Sigmoid colon (tissue), 7 donors: ENCODE measurements at regions of chr7 and their contacts with region 1.

Region 1: DNA sequence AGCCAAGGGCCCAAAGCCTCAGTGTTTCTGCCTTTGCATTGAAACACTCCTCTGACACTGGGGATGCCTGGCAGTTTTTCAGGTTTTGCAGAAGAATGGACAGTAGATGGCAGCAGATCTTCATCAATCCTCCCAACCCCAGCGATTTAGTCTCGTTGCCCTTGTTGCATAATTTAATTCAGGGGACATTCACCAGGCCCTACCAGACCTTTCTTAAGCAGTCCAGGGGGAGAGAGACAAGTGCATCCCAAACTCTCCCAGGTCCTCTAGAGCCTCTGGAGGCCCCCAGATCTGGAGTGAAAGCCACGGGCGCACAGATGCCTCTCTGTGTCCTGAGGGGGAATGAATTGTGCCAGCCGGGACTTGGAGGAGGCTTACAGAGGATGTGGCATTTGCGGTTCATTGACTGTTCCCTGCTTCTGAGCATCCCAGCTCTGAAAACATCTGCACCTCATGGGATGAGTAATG is 29.6 kb downstream of the MINDY4 start:
- DNase-seq: peak; percentile 90
- H3K4me3 ChIP-seq: no peak overlapping the region
- H3K27ac ChIP-seq: peak overlapping the region; percentile 15 to 59 (median 37)
- H3K4me1 ChIP-seq: peaks cover 0 to 72% (median 62%) of the 10 kb centered on the region in 4 donors
- H3K27me3 ChIP-seq: no peaks in the 10 kb centered on the region
- CTCF ChIP-seq: peak; percentile 64 to 76 (median 70)
- EP300 ChIP-seq: peak in 1 of 4 donors; percentile 13
- POLR2A ChIP-seq: no peak

Region 2: DNA sequence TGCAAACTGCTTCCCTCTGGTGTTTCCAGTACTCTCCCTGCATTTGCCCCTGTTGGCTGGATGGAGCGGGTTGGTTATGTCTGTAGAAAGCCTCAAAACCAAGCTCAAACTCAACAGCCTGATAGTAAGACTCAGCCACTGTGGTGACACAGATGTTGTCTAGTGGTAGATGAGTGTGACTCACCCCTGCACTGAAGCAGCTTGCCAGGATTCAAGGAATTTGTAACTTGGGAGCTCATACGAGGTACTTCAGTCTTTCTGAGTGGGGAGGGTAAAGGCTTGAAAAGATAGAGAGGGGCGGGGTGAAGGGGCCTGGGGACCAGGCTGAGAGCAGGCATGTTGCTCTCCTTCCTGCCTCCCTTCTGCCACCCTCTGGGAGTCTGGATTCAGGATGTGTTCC is 87.9 kb after region 1 on chr7:
- intact Hi-C with region 1: loop called (anchors 5 kb)
- DNase-seq: peak; percentile 79
- H3K4me3 ChIP-seq: no peak overlapping the region
- H3K27ac ChIP-seq: peak overlapping the region; percentile 63 to 75 (median 72)
- H3K4me1 ChIP-seq: peaks cover 0 to 41% (median 35%) of the 10 kb centered on the region in 4 donors
- H3K27me3 ChIP-seq: no peaks in the 10 kb centered on the region
- CTCF ChIP-seq: no peak
- EP300 ChIP-seq: no peak
- POLR2A ChIP-seq: no peak

Region 3: DNA sequence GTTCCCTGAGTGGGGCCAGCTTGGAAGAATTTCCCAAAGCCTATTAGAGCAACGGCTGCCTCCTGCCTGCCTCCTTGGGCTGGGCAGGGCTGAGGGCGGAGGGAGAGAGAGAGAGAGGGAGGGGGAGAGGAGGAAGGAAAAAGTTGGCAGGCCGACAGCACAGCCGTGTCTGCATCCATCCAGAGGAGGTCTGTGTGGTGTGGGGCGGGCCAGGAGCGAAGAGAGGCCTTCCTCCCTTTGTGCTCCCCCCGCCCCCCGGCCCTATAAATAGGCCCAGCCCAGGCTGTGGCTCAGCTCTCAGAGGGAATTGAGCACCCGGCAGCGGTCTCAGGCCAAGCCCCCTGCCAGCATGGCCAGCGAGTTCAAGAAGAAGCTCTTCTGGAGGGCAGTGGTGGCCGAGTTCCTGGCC is 110.7 kb after region 1 on chr7 and contains the start of gene AQP1:
- intact Hi-C with region 1: loop called (anchors 5 kb)
- DNase-seq: peak; percentile 96
- H3K4me3 ChIP-seq: peak within 1 kb of the TSS; percentile 9 to 52 (median 44)
- H3K27ac ChIP-seq: peak within 1 kb of the TSS; percentile 86 to 90 (median 88)
- H3K4me1 ChIP-seq: peaks cover 0 to 94% (median 89%) of the 10 kb centered on the region in 4 donors
- H3K27me3 ChIP-seq: no peaks in the 10 kb centered on the region
- CTCF ChIP-seq: no peak
- EP300 ChIP-seq: no peak
- POLR2A ChIP-seq: peak; percentile 63 to 83
- total RNA-seq, gene AQP1: 66.0 to 191 (median 146) TPM

Region 4: GRCh38 chr7:30938435-30939316 is 137.9 kb after region 1 on chr7:
- intact Hi-C with region 1: loop called (anchors 2 kb)
- DNase-seq: peak; percentile 89
- H3K4me3 ChIP-seq: peak overlapping the region in 2 of 4 donors; percentile 7 to 9
- H3K27ac ChIP-seq: no peak overlapping the region
- H3K4me1 ChIP-seq: peaks cover 0 to 7% (median 2%) of the 10 kb centered on the region in 4 donors
- H3K27me3 ChIP-seq: no peaks in the 10 kb centered on the region
- CTCF ChIP-seq: peak; percentile 54 to 98 (median 88)
- EP300 ChIP-seq: no peak
- POLR2A ChIP-seq: no peak

Region 5: DNA sequence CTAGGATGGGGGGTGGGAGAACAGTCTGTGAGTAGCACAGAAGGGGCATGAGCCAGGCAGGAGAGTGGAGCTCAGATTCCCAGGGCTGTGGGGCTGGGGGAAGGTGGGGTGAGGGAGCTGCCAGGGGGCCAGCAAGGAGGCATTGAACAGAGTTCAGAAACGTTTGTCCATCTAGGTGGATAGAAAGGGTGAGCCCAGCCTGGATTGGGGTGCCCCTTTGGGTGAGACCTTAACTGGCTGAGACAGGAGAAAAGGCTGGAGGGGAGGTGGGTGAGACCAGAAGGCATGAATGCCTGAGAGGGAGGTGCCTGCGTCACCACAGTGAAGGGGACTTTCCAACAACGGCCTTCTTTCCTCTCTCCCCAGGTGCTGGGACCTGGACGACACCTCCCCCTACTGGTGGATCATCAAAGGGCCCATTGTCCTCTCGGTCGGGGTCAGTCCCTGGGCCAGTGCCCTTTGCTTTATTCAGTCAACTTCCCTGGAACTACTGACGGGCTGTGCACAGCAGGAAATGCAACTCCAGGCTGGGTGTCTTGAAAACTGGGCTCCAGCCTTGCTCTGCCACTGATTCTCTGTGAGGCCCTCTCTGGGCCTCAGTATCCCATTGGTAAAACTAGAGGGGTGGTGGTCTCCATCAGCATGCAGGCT is 173.9 kb after region 1 on chr7:
- intact Hi-C with region 1: loop called (anchors 2 kb)
- DNase-seq: peak; percentile 62
- H3K4me3 ChIP-seq: no peak overlapping the region
- H3K27ac ChIP-seq: no peak overlapping the region
- H3K4me1 ChIP-seq: peaks cover 0 to 6% (median 0%) of the 10 kb centered on the region in 4 donors
- H3K27me3 ChIP-seq: peaks cover 0 to 4% (median 0%) of the 10 kb centered on the region in 3 donors
- CTCF ChIP-seq: peak; percentile 37 to 61 (median 52)
- EP300 ChIP-seq: no peak
- POLR2A ChIP-seq: no peak

Region 6: GRCh38 chr7:31122649-31123058 is 321.8 kb after region 1 on chr7:
- intact Hi-C with region 1: loop called (anchors 1 kb)
- DNase-seq: peak; percentile 86
- H3K4me3 ChIP-seq: no peak overlapping the region
- H3K27ac ChIP-seq: no peak overlapping the region
- H3K4me1 ChIP-seq: peaks cover 0 to 9% (median 0%) of the 10 kb centered on the region in 4 donors
- H3K27me3 ChIP-seq: no peaks in the 10 kb centered on the region
- CTCF ChIP-seq: peak; percentile 49 to 76 (median 69)
- EP300 ChIP-seq: no peak
- POLR2A ChIP-seq: no peak

Region 7: DNA sequence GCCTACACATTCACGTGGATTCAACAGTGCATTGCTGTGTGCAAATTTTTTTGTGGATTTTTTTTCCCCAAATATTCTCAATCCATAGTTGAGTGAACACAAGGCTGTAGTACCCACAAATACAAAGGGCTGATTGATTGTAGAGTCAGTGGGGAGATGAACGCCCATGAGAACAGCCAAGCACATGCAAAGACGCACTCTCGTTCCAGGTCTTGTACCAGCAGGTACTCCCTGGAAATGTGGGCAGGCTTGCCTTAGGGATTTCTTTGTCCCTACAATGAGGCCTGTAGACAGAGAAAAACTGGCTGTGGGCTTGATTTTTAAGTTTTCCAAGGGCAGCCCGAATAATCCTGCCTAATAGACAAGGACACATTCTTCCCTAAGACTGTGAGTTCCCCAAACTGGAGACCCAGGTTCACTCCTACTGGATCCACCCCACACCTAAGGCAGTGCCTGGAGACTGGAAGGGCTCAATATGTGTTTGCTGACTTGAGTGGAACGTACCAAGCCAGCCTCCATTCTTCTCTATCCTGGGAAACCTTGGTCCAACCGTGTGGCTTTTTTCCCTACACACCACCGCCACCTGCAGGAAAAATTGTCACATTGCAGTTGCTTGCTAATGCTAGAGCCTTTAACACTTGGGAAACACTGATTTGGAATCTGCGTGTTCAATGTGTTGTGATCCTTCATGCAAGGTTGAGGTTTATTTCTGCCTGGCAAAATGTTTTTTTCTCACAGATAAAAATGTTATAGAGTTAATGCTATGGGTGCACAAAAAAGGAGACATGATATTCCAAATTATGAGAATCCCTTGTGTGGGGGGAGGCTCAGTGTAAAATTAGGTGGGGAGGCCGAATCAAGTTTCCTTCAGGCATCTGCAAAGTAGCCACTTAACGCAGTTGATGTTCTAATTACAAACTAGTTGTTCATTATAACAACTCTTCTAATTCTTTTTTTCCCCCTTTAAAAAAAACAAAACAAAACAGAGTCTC is 935.5 kb after region 1 on chr7:
- intact Hi-C with region 1: loop called (anchors 5 kb)
- DNase-seq: peak; percentile 74
- H3K4me3 ChIP-seq: no peak overlapping the region
- H3K27ac ChIP-seq: no peak overlapping the region
- H3K4me1 ChIP-seq: no peaks in the 10 kb centered on the region
- H3K27me3 ChIP-seq: peaks cover 0 to 5% (median 0%) of the 10 kb centered on the region in 3 donors
- CTCF ChIP-seq: peak; percentile 60 to 80 (median 76)
- EP300 ChIP-seq: no peak
- POLR2A ChIP-seq: no peak